Activated B cell treated with CpG ODN at 0.5 μM for 24 hours (primary cell): ENCODE measurements at regions of chr12 and their contacts with region 1.

Region 1: GRCh38 chr12:39587225-39587624 is 32.4 kb downstream of the ABCD2 start:
- DNase-seq: no peak
- ATAC-seq: peak; percentile 62
- H3K4me3 Mint-ChIP-seq: no peak overlapping the region
- H3K27ac Mint-ChIP-seq: no peak overlapping the region
- H3K4me1 Mint-ChIP-seq: peaks cover 2% of the 10 kb centered on the region
- H3K27me3 Mint-ChIP-seq: no peaks in the 10 kb centered on the region
- CTCF ChIP-seq: no peak

Region 2: DNA sequence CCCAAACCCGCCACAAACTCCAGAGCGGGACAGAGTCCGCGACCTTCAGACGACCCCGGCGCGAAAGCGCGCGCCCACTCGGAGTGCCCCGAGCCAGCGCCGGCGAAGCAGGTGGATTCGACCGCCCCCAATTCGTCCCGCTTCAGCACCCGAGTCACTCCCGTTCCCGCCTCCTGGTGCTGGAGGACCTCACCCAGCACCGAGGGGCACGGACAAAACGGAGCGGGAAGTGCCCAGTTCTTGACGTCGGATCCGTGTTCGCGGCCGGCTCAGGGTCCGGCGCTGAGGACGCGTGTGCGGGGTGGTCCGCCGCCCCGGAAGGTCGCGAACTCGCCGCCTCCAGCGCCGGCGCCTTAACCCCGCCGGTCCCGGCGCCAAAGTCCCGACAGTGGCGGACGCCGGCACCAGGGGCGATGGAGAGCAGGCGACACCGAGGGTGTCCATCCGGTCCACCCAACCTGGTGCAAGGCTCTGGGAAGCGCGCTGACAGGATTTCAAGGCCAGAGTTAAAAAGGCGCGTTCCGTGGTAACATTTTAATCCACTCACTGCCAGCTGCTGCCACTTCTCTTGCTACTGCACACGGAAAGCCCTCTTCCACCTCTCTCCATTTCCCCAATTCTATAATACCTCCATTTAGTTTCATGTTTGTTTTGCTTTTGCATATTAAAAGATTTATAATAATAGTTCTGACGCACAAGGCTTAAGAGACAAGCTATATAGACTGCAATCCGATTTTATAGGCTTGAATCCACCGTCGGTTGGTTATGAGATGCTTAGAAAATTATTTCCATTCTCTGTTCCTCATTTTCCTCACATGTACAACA is 441.8 kb before region 1 on chr12:
- CTCF ChIA-PET with region 1: no interaction called
- POLR2A ChIA-PET with region 1: no interaction called
- intact Hi-C with region 1: no loop called
- DNase-seq: no peak
- ATAC-seq: no peak
- H3K4me3 Mint-ChIP-seq: no peak overlapping the region
- H3K27ac Mint-ChIP-seq: no peak overlapping the region
- H3K4me1 Mint-ChIP-seq: no peaks in the 10 kb centered on the region
- H3K27me3 Mint-ChIP-seq: peaks cover 16% of the 10 kb centered on the region
- CTCF ChIP-seq: no peak

Region 3: GRCh38 chr12:39628836-39629235 is 41.6 kb after region 1 on chr12:
- CTCF ChIA-PET with region 1: no interaction called
- POLR2A ChIA-PET with region 1: no interaction called
- intact Hi-C with region 1: no loop called
- DNase-seq: no peak
- ATAC-seq: no peak
- H3K4me3 Mint-ChIP-seq: no peak overlapping the region
- H3K27ac Mint-ChIP-seq: no peak overlapping the region
- H3K4me1 Mint-ChIP-seq: peaks cover 11% of the 10 kb centered on the region
- H3K27me3 Mint-ChIP-seq: no peaks in the 10 kb centered on the region
- CTCF ChIP-seq: no peak

Region 4: GRCh38 chr12:39764944-39765560 is 177.8 kb after region 1 on chr12:
- CTCF ChIA-PET with region 1: no interaction called
- POLR2A ChIA-PET with region 1: no interaction called
- intact Hi-C with region 1: loop called (anchors 5 kb)
- DNase-seq: no peak
- ATAC-seq: peak; percentile 45
- H3K4me3 Mint-ChIP-seq: no peak overlapping the region
- H3K27ac Mint-ChIP-seq: no peak overlapping the region
- H3K4me1 Mint-ChIP-seq: no peaks in the 10 kb centered on the region
- H3K27me3 Mint-ChIP-seq: no peaks in the 10 kb centered on the region
- CTCF ChIP-seq: peak; percentile 37

Region 5: GRCh38 chr12:40011775-40012129 is 424.5 kb after region 1 on chr12:
- CTCF ChIA-PET with region 1: no interaction called
- POLR2A ChIA-PET with region 1: no interaction called
- intact Hi-C with region 1: no loop called
- DNase-seq: no peak
- ATAC-seq: no peak
- H3K4me3 Mint-ChIP-seq: peak overlapping the region; percentile 68
- H3K27ac Mint-ChIP-seq: peak overlapping the region; percentile 20
- H3K4me1 Mint-ChIP-seq: peaks cover 17% of the 10 kb centered on the region
- H3K27me3 Mint-ChIP-seq: no peaks in the 10 kb centered on the region
- CTCF ChIP-seq: no peak